ENCODE measurements at regions of chr11 and their contacts with region 1.

Region 1: DNA sequence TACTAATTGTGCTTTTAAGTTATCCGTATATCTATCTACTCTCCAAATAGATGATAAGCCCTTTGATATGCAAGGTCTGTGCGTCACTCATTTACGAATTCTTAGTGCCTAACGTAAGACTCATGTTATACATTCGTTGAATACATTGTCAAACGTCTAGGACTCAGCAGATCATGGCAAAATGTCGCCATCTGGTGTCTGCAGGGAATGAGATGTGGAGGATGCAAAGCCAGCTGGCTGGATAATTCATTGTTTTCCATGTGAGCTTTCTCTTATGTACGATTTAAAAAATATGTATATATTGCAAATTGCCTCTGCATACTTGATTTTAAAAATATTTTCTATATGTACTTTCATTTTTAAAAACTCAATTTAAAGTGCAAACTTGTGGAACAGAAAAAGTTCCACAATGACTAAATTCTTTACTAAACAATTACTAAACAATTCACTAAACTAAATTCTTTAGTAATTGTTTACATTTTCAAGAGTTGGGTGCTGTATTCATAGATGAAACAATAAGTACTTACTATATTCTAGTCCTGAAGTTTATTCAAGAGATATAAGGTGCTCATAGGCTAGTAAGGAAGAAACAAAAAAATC is 33.8 kb downstream of the ZNF202 start:
- DNase-seq: peak; percentile 53
- H3K4me3 Mint-ChIP-seq: no peak overlapping the region
- H3K27ac Mint-ChIP-seq: no peak overlapping the region
- H3K4me1 Mint-ChIP-seq: no peaks in the 10 kb centered on the region
- H3K27me3 Mint-ChIP-seq: peaks cover 28% of the 10 kb centered on the region
- CTCF ChIP-seq: peak; percentile 20

Region 2: GRCh38 chr11:123511037-123511870 is 196.5 kb before region 1 on chr11:
- CTCF ChIA-PET with region 1: no interaction called
- intact Hi-C with region 1: loop called (anchors 1 kb)
- DNase-seq: peak; percentile 81
- H3K4me3 Mint-ChIP-seq: no peak overlapping the region
- H3K27ac Mint-ChIP-seq: no peak overlapping the region
- H3K4me1 Mint-ChIP-seq: peaks cover 8% of the 10 kb centered on the region
- H3K27me3 Mint-ChIP-seq: peaks cover 85% of the 10 kb centered on the region
- CTCF ChIP-seq: peak; percentile 74

Region 3: DNA sequence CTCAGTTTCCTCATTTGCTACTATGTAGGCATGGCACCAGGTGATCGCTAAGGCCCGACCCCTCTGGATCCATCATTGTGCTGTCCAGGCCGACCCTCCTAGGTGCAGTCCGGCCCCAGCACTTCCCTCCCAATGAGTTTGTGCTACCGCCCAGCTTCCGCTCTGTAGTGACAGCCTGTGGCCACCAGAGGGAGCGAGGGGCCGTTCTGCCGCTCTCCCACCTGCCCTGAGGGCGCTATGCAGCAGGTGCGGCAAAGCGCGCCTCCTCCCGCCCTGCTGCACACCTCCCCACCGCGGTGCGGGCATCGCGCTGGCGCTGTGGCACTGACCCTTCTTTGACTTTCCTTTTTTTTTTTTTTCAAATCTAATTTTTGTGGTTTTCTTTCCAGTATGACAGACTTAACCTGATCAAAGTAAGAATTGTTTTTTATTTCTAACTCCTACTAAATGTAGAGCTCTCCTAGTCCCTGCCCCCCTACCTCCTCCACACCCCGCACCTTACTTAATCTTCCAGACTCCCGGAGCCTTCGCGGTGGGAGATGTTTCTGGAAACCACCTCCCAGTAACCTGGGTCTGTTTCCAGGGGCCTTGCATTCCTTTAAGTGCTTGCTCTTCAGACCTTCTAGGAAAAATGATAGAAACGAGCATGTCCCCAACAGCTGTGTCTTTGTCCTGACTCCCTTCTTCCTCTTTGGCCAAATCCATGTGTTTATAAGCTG is 127.0 kb before region 1 on chr11:
- CTCF ChIA-PET with region 1: interaction called, 18 read pairs
- intact Hi-C with region 1: loop called (anchors 1 kb)
- DNase-seq: peak; percentile 79
- H3K4me3 Mint-ChIP-seq: no peak overlapping the region
- H3K27ac Mint-ChIP-seq: no peak overlapping the region
- H3K4me1 Mint-ChIP-seq: peaks cover 29% of the 10 kb centered on the region
- H3K27me3 Mint-ChIP-seq: peaks cover 54% of the 10 kb centered on the region
- CTCF ChIP-seq: peak; percentile 89

Region 4: DNA sequence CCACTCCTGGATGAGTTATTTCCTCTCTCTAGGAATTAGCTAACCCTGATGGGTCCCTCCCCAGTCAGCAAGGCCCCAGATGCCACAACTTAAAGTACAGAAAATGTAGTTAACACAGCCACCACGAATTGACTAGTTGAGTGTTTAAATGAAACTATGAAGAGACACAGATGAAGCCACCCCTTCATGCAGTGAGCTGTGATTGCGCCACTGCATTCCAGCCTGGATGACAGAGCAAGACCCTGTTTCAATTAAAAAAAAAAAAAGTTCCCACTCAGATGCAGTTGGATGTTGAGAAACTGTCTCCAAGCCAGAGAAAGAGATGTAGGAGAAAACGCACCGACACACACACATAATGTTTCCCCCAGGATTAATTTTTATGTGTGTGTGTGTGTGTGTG is 106.6 kb before region 1 on chr11:
- CTCF ChIA-PET with region 1: no interaction called
- intact Hi-C with region 1: no loop called
- DNase-seq: no peak
- H3K4me3 Mint-ChIP-seq: no peak overlapping the region
- H3K27ac Mint-ChIP-seq: no peak overlapping the region
- H3K4me1 Mint-ChIP-seq: no peaks in the 10 kb centered on the region
- H3K27me3 Mint-ChIP-seq: no peaks in the 10 kb centered on the region
- CTCF ChIP-seq: no peak

Region 5: GRCh38 chr11:123640677-123641494 is 66.8 kb before region 1 on chr11:
- CTCF ChIA-PET with region 1: interaction called, 8 read pairs
- intact Hi-C with region 1: loop called (anchors 1 kb)
- DNase-seq: peak; percentile 43
- H3K4me3 Mint-ChIP-seq: no peak overlapping the region
- H3K27ac Mint-ChIP-seq: no peak overlapping the region
- H3K4me1 Mint-ChIP-seq: no peaks in the 10 kb centered on the region
- H3K27me3 Mint-ChIP-seq: peaks cover 84% of the 10 kb centered on the region
- CTCF ChIP-seq: peak; percentile 65

Region 6: DNA sequence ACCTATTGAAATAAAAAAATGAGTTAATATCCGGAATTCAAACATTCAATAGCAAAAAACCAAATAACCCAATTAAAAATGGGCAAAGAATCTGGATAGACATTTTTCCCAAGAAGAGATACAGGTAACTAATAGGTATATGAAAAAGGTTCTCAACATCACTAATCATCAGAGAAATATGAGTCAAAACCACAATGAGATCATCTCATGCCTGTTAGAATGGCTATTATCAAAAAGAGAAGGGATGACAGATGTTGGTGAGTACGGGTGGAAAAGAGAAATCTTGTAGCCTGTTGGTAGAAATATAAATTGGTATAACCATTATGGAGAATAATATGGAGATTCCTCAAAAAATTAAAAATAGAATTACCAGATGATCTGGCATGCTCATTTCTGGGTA is 125.4 kb after region 1 on chr11:
- CTCF ChIA-PET with region 1: no interaction called
- intact Hi-C with region 1: no loop called
- DNase-seq: no peak
- H3K4me3 Mint-ChIP-seq: no peak overlapping the region
- H3K27ac Mint-ChIP-seq: no peak overlapping the region
- H3K4me1 Mint-ChIP-seq: no peaks in the 10 kb centered on the region
- H3K27me3 Mint-ChIP-seq: no peaks in the 10 kb centered on the region
- CTCF ChIP-seq: no peak

Measured in Calu3 (cell line).